Cardiac septum (tissue), 1 donor: ENCODE measurements at regions of chr7 and their contacts with region 1.

Region 1: GRCh38 chr7:92988051-92988450 is 129.7 kb downstream of the SAMD9 start:
- DNase-seq: no peak

Region 2: GRCh38 chr7:92621026-92621540 is 367.0 kb before region 1 on chr7:
- intact Hi-C with region 1: loop called (anchors 10 kb)
- DNase-seq: no peak